Activated CD4-positive, alpha-beta memory T cell treated with anti-CD3 and anti-CD28 coated beads for 36 hours (primary cell): ENCODE measurements at regions of chr1 and their contacts with region 1.

Region 1: GRCh38 chr1:94854458-94855306 is 34.5 kb downstream of the SLC44A3 start:
- DNase-seq: peak; percentile 86
- H3K4me3 Mint-ChIP-seq: no peak overlapping the region
- H3K27ac Mint-ChIP-seq: no peak overlapping the region
- H3K4me1 Mint-ChIP-seq: no peaks in the 10 kb centered on the region
- H3K27me3 Mint-ChIP-seq: peaks cover 1% of the 10 kb centered on the region

Region 2: GRCh38 chr1:94873522-94874351 is 19.1 kb after region 1 on chr1:
- CTCF ChIA-PET with region 1: interaction called, 10 read pairs
- POLR2A ChIA-PET with region 1: no interaction called
- intact Hi-C with region 1: no loop called
- DNase-seq: no peak
- H3K4me3 Mint-ChIP-seq: no peak overlapping the region
- H3K27ac Mint-ChIP-seq: no peak overlapping the region
- H3K4me1 Mint-ChIP-seq: no peaks in the 10 kb centered on the region
- H3K27me3 Mint-ChIP-seq: peaks cover 2% of the 10 kb centered on the region